ENCODE measurements at regions of chr2 and their contacts with region 1.

Region 1: GRCh38 chr2:71226965-71227560 is at the start of gene PAIP2B:
- DNase-seq: peak; percentile 98
- ATAC-seq: peak; percentile 91
- H3K4me3 ChIP-seq: peak within 1 kb of the TSS; percentile 33 to 86 (median 79)
- H3K4me3 Mint-ChIP-seq: peak within 1 kb of the TSS; percentile 95
- H3K27ac ChIP-seq: peak within 1 kb of the TSS; percentile 63 to 82
- H3K27ac Mint-ChIP-seq: peak within 1 kb of the TSS; percentile 95
- H3K4me1 ChIP-seq: peaks cover 15 to 21% of the 10 kb centered on the region in 2 donors
- H3K4me1 Mint-ChIP-seq: peaks cover 28% of the 10 kb centered on the region
- H3K27me3 ChIP-seq: no peaks in the 10 kb centered on the region
- H3K27me3 Mint-ChIP-seq: peaks cover 5% of the 10 kb centered on the region
- CTCF ChIP-seq: no peak
- total RNA-seq, gene PAIP2B: 10.1 and 10.2 TPM in 2 replicates

Region 2: DNA sequence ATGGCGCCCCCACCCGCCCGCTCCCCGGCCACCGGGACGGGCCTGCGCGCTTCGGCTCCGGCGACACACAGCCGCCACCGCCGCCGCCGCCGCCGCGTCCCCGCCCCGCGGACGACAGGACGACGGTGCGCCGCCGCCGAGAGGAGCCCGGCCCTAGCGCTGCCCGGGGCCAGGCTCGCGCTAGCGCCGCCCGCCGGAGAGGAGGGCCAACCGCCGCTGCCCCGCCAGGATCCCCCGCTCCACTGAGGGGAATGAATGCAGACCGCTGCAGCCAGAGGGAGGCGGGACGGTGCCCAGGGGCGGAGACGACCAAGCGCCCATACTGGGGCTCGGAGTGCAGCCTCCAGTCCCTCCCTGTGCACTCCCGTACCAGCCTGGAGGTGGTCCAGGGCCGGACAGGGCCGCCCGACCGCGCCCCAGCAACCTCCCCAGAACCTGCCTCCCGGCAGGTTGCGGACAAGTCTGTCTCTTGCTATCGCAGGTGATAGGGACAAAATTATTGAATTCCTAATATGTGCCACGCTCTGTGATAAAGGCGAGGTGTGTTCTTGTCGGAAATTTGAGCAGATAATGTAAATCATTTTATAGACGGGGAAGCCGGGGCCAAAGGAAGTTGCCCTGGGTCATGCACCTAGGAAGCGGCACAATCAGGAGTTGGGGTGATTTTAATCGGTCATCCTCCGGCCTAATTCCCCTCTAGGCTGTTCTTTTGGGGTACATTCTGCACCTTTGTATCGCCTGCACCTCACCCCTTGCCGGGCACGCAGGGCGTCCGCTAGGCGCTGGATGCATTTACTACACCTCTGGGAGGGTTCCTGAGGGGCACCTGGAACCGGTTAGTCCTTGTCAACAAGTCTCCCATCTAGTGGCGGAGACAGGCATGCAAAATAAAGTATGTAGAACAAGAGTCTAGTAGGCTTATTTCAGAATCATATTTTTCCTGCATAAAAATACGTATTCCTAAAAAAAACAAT is 232.0 kb before region 1 on chr2 and contains the start of gene TEX261:
- CTCF ChIA-PET with region 1: no interaction called
- POLR2A ChIA-PET with region 1: no interaction called
- intact Hi-C with region 1: loop called (anchors 1 kb)
- DNase-seq: peak; percentile 92
- ATAC-seq: peak; percentile 97
- H3K4me3 ChIP-seq: peak within 1 kb of the TSS; percentile 81 to 93 (median 89)
- H3K4me3 Mint-ChIP-seq: peak within 1 kb of the TSS; percentile 96
- H3K27ac ChIP-seq: peak within 1 kb of the TSS; percentile 32 to 77
- H3K27ac Mint-ChIP-seq: peak within 1 kb of the TSS; percentile 92
- H3K4me1 ChIP-seq: peaks cover 21 to 23% of the 10 kb centered on the region in 2 donors
- H3K4me1 Mint-ChIP-seq: peaks cover 34% of the 10 kb centered on the region
- H3K27me3 ChIP-seq: no peaks in the 10 kb centered on the region
- H3K27me3 Mint-ChIP-seq: no peaks in the 10 kb centered on the region
- CTCF ChIP-seq: peak; percentile 59
- total RNA-seq, gene TEX261: 54.0 and 56.4 TPM in 2 replicates

Region 3: DNA sequence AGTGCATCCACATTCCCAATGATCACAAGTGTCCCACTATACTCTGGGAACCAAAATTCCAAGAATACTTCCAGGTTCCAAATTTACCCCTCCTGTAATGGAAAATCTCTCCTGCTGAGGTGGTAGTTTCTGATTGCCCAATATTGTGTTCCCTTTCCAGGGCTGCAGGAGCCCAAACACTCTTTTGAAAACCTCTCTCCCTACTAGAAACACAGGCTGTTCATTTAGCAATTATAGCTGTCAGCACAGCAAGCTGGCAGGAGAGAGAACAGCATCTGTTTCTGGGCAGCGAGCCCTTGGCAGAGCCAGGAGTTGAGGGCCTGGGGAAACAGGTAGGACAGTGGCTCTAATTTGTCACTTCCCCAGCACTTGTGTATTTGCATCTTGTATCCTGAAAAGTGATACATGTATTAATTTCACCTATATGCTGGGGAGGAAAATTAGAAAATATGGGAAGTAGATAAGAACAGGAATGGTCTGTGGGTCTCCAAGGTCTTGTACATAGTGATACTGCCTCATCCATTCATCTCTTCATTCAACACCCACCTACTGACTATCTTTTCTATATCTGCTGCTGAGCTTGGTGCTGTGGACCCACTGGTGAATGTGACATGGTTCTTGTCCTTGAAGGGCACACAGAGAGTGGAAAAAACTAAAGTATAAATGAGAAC is 16.7 kb after region 1 on chr2:
- CTCF ChIA-PET with region 1: no interaction called
- POLR2A ChIA-PET with region 1: no interaction called
- intact Hi-C with region 1: no loop called
- DNase-seq: no peak
- ATAC-seq: no peak
- H3K4me3 ChIP-seq: no peak overlapping the region
- H3K4me3 Mint-ChIP-seq: no peak overlapping the region
- H3K27ac ChIP-seq: no peak overlapping the region
- H3K27ac Mint-ChIP-seq: no peak overlapping the region
- H3K4me1 ChIP-seq: peaks cover 10 to 16% of the 10 kb centered on the region in 2 donors
- H3K4me1 Mint-ChIP-seq: peaks cover 16% of the 10 kb centered on the region
- H3K27me3 ChIP-seq: peaks cover 0 to 5% (median 0%) of the 10 kb centered on the region in 4 experiments
- H3K27me3 Mint-ChIP-seq: peaks cover 15% of the 10 kb centered on the region
- CTCF ChIP-seq: no peak

Region 4: DNA sequence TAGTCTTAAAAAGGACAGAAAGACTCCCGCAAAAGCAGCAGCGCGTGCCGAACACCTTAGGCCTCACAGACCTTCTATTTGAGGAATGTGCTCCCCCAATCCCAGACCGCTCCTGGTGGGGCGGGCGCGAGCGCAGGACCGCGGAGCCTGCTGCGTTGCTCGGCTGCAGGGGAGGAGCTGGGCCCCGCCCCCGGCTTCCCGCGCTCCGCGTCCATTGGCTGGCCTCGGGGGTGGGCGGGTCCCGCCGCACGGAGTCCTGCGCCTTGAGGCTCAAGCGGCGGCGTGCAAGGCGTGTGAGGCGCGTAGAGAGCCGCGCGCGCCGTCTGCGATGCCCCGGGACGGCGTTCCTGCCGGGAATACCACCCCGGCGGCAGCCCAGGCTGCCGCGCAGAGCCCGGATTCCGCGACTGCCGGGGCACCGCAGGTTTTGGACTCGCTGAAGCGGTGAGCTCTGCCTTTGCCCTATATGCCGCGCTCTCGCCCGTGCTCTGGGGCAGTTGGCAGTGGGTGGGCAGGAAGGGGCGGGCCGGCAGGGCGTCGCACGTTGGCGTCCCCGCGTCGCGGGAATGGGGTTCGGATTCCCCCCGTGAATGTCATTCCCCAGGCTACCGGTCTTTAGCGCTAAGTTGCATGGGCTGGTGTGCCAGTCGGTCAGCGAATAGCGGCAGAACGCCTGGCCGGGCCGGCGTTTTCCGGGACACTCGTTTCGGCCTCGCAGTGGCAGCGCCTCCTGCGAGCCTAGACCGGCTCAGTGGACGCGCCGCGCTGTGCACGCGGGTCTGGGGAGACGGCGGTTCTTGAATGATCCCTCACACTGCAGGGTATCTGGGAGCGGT is 49.5 kb after region 1 on chr2:
- CTCF ChIA-PET with region 1: interaction called, 4 read pairs
- POLR2A ChIA-PET with region 1: no interaction called
- intact Hi-C with region 1: loop called (anchors 1 kb)
- DNase-seq: peak; percentile 90
- ATAC-seq: peak; percentile 99
- H3K4me3 ChIP-seq: peak overlapping the region; percentile 23 to 77 (median 58)
- H3K4me3 Mint-ChIP-seq: peak overlapping the region; percentile 87
- H3K27ac ChIP-seq: no peak overlapping the region
- H3K27ac Mint-ChIP-seq: peak overlapping the region; percentile 24
- H3K4me1 ChIP-seq: peaks cover 18 to 19% of the 10 kb centered on the region in 2 donors
- H3K4me1 Mint-ChIP-seq: peaks cover 22% of the 10 kb centered on the region
- H3K27me3 ChIP-seq: peaks cover 0 to 19% (median 9%) of the 10 kb centered on the region in 4 experiments
- H3K27me3 Mint-ChIP-seq: peaks cover 54% of the 10 kb centered on the region
- CTCF ChIP-seq: no peak

Region 5: GRCh38 chr2:71331581-71332434 is 104.7 kb after region 1 on chr2 and contains the start of gene ZNF638:
- CTCF ChIA-PET with region 1: interaction called, 9 read pairs
- POLR2A ChIA-PET with region 1: no interaction called
- intact Hi-C with region 1: loop called (anchors 1 kb)
- DNase-seq: peak; percentile 97
- ATAC-seq: peak; percentile 97
- H3K4me3 ChIP-seq: peak within 1 kb of the TSS; percentile 85 to 92 (median 90)
- H3K4me3 Mint-ChIP-seq: peak within 1 kb of the TSS; percentile 99
- H3K27ac ChIP-seq: peak within 1 kb of the TSS; percentile 88 to 91
- H3K27ac Mint-ChIP-seq: peak within 1 kb of the TSS; percentile 100
- H3K4me1 ChIP-seq: peaks cover 21 to 22% of the 10 kb centered on the region in 2 donors
- H3K4me1 Mint-ChIP-seq: peaks cover 37% of the 10 kb centered on the region
- H3K27me3 ChIP-seq: no peaks in the 10 kb centered on the region
- H3K27me3 Mint-ChIP-seq: no peaks in the 10 kb centered on the region
- CTCF ChIP-seq: peak; percentile 82
- total RNA-seq, gene ZNF638: 221 and 227 TPM in 2 replicates

Region 6: DNA sequence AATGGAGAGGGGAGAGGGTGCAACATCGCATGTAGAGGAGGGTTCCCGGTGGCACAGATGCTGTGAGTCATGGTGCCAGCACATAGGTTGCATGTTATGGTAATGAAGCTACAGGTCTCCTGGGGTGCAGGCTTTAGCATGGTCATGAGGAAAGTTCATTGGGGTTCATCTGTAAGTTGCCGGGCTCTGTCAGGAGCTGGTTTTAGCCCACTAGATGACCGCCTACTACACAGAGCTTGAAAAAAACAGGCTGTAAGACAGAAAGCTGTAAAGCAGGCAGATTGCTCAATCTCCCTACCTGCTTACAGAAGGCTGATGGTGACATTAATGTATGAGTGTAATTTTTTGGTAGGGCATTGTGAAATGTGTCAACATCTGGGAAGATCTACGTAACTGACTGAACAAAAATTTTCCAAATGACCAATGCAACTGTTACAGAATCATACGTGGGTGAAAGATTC is 250.2 kb after region 1 on chr2:
- CTCF ChIA-PET with region 1: no interaction called
- POLR2A ChIA-PET with region 1: no interaction called
- intact Hi-C with region 1: no loop called
- DNase-seq: no peak
- ATAC-seq: no peak
- H3K4me3 ChIP-seq: no peak overlapping the region
- H3K4me3 Mint-ChIP-seq: no peak overlapping the region
- H3K27ac ChIP-seq: no peak overlapping the region
- H3K27ac Mint-ChIP-seq: no peak overlapping the region
- H3K4me1 ChIP-seq: no peaks in the 10 kb centered on the region
- H3K4me1 Mint-ChIP-seq: peaks cover 5% of the 10 kb centered on the region
- H3K27me3 ChIP-seq: no peaks in the 10 kb centered on the region
- H3K27me3 Mint-ChIP-seq: peaks cover 10% of the 10 kb centered on the region
- CTCF ChIP-seq: no peak

Region 7: GRCh38 chr2:71510196-71510807 is 283.2 kb after region 1 on chr2:
- CTCF ChIA-PET with region 1: interaction called, 34 read pairs
- POLR2A ChIA-PET with region 1: no interaction called
- intact Hi-C with region 1: no loop called
- DNase-seq: peak; percentile 73
- ATAC-seq: peak; percentile 54
- H3K4me3 ChIP-seq: no peak overlapping the region
- H3K4me3 Mint-ChIP-seq: no peak overlapping the region
- H3K27ac ChIP-seq: no peak overlapping the region
- H3K27ac Mint-ChIP-seq: no peak overlapping the region
- H3K4me1 ChIP-seq: no peaks in the 10 kb centered on the region
- H3K4me1 Mint-ChIP-seq: peaks cover 2% of the 10 kb centered on the region
- H3K27me3 ChIP-seq: no peaks in the 10 kb centered on the region
- H3K27me3 Mint-ChIP-seq: peaks cover 11% of the 10 kb centered on the region
- CTCF ChIP-seq: peak; percentile 86